ENCODE measurements at regions of chr12 and their contacts with region 1.

Region 1: DNA sequence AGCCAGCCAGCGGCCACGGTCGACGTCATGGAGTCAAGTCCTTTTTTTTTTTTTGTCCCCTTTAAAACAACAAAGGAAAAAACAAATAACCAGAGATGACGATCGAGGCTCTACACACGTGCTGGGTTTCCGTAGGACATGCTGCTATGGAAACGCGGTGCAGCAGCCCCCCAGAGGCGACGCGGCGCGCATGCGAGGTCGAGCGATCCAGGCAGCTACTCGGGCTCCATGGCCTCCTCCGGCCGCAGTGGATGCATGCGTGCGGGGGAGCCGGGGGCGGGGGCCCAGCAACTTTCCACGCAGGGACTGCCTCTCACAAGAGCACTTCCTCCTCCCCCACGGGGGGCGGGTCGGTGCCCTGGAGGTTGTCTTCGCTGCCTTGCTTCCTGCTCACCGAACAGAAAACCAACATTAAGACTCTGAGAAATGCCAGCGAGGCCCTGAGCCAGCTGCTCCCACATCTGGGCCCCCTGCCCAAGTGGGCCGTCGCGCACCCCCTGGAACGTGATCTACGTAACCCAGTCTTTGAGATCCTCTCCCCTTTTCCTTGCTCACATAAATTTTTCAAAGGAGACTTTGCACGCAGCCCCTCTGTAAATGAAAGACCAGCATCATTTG is 30.7 kb downstream of the P2RX4 start:
- DNase-seq: peak; percentile 82 to 100 (median 94)
- ATAC-seq: peak; percentile 95
- H3K4me3 ChIP-seq: peak overlapping the region; percentile 40 to 42
- H3K4me3 Mint-ChIP-seq: peak overlapping the region; percentile 84
- H3K27ac ChIP-seq: peak overlapping the region; percentile 85 to 88
- H3K27ac Mint-ChIP-seq: peak overlapping the region; percentile 96
- H3K4me1 ChIP-seq: peaks cover 42% of the 10 kb centered on the region
- H3K4me1 Mint-ChIP-seq: peaks cover 47% of the 10 kb centered on the region
- H3K27me3 ChIP-seq: no peaks in the 10 kb centered on the region
- H3K27me3 Mint-ChIP-seq: no peaks in the 10 kb centered on the region
- CTCF ChIP-seq: no peak

Region 2: GRCh38 chr12:121128970-121129810 is 111.4 kb before region 1 on chr12:
- CTCF ChIA-PET with region 1: interaction called, 3 read pairs
- POLR2A ChIA-PET with region 1: interaction called, 3 read pairs
- intact Hi-C with region 1: loop called in 1 of 2 experiments (anchors 1 kb)
- DNase-seq: peak; percentile 54 to 92 (median 79)
- ATAC-seq: peak; percentile 86
- H3K4me3 ChIP-seq: peak overlapping the region; percentile 29 to 45
- H3K4me3 Mint-ChIP-seq: peak overlapping the region; percentile 82
- H3K27ac ChIP-seq: peak overlapping the region; percentile 40 to 90
- H3K27ac Mint-ChIP-seq: peak overlapping the region; percentile 92
- H3K4me1 ChIP-seq: peaks cover 55% of the 10 kb centered on the region
- H3K4me1 Mint-ChIP-seq: peaks cover 86% of the 10 kb centered on the region
- H3K27me3 ChIP-seq: no peaks in the 10 kb centered on the region
- H3K27me3 Mint-ChIP-seq: no peaks in the 10 kb centered on the region
- CTCF ChIP-seq: no peak

Region 3: DNA sequence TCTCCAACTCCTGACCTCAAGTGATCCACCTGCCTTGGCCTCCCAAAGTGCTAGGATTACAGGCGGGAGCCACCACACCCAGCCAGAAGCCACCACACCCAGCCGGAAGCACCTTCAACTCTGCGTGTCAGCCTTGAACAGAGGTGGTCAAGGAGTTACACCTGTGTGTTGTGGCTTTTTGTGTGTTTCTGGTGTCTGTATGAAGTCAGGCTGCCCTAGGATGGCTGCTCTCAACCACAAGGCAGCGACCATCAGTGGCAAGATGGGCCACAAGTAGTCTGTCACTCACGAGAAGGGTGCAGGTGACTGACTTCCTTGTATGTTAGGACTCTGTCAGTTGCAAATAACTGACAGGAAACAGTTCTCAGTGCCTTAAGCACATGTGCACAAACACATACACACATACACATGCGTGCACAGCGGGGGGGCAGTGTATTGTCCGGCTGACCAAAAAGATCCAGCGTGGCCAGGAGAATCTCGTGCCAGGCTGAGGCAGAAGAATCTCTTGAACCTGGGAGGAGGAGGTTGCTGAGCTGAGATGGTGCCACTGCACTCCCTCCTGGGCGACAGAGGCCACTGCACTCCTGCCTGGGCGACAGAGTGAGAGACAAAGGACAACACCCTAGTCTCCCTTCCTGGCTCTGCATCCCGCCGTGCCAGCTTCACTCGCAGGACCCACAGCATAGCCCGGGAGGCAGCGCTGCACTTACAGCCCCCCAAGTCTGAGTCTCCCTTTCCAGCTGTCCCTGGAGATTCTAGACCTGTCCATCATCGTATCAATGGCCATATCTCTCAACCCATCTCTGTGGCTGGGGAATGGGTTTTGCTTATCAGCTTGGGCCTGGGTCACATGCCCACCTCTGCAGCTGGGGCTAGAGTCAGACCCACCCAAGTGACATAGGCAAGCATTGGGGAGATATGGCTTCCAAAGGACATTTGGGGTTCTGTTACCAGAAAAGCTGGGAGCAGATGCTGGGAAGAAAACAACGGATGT is 17.0 kb before region 1 on chr12:
- CTCF ChIA-PET with region 1: interaction called, 11 read pairs
- POLR2A ChIA-PET with region 1: interaction called, 13 read pairs
- intact Hi-C with region 1: loop called in 1 of 2 experiments (anchors 2 kb)
- DNase-seq: peak in 6 of 9 experiments; percentile 32 to 72 (median 46)
- ATAC-seq: peak; percentile 58
- H3K4me3 ChIP-seq: no peak overlapping the region
- H3K4me3 Mint-ChIP-seq: peak overlapping the region; percentile 46
- H3K27ac ChIP-seq: peak overlapping the region; percentile 35 to 69
- H3K27ac Mint-ChIP-seq: peak overlapping the region; percentile 95
- H3K4me1 ChIP-seq: peaks cover 41% of the 10 kb centered on the region
- H3K4me1 Mint-ChIP-seq: peaks cover 43% of the 10 kb centered on the region
- H3K27me3 ChIP-seq: no peaks in the 10 kb centered on the region
- H3K27me3 Mint-ChIP-seq: no peaks in the 10 kb centered on the region
- CTCF ChIP-seq: peak; percentile 34

Region 4: GRCh38 chr12:121296618-121297434 is 56.2 kb after region 1 on chr12 and contains the start of gene CAMKK2:
- CTCF ChIA-PET with region 1: no interaction called
- POLR2A ChIA-PET with region 1: interaction called, 6 read pairs
- intact Hi-C with region 1: loop called (anchors 1 to 2 kb)
- DNase-seq: peak; percentile 77 to 94 (median 85)
- ATAC-seq: peak; percentile 88
- H3K4me3 ChIP-seq: peak within 1 kb of the TSS; percentile 73 to 93
- H3K4me3 Mint-ChIP-seq: peak within 1 kb of the TSS; percentile 87
- H3K27ac ChIP-seq: peak within 1 kb of the TSS; percentile 31 to 59
- H3K27ac Mint-ChIP-seq: peak within 1 kb of the TSS; percentile 80
- H3K4me1 ChIP-seq: peaks cover 15% of the 10 kb centered on the region
- H3K4me1 Mint-ChIP-seq: peaks cover 20% of the 10 kb centered on the region
- H3K27me3 ChIP-seq: no peaks in the 10 kb centered on the region
- H3K27me3 Mint-ChIP-seq: no peaks in the 10 kb centered on the region
- CTCF ChIP-seq: no peak
- total RNA-seq, gene CAMKK2: 3.6 to 4.1 TPM

Region 5: GRCh38 chr12:121536899-121537813 is 296.6 kb after region 1 on chr12:
- CTCF ChIA-PET with region 1: no interaction called
- POLR2A ChIA-PET with region 1: no interaction called
- intact Hi-C with region 1: no loop called
- DNase-seq: peak in 8 of 9 experiments; percentile 22 to 83 (median 58)
- ATAC-seq: peak; percentile 5
- H3K4me3 ChIP-seq: peak overlapping the region; percentile 52 to 68
- H3K4me3 Mint-ChIP-seq: peak overlapping the region; percentile 80
- H3K27ac ChIP-seq: peak overlapping the region; percentile 80 to 83
- H3K27ac Mint-ChIP-seq: peak overlapping the region; percentile 96
- H3K4me1 ChIP-seq: peaks cover 34% of the 10 kb centered on the region
- H3K4me1 Mint-ChIP-seq: peaks cover 43% of the 10 kb centered on the region
- H3K27me3 ChIP-seq: no peaks in the 10 kb centered on the region
- H3K27me3 Mint-ChIP-seq: no peaks in the 10 kb centered on the region
- CTCF ChIP-seq: no peak